Caco-2 (cell line): ENCODE measurements at regions of chr15 and their contacts with region 1.

Region 1: DNA sequence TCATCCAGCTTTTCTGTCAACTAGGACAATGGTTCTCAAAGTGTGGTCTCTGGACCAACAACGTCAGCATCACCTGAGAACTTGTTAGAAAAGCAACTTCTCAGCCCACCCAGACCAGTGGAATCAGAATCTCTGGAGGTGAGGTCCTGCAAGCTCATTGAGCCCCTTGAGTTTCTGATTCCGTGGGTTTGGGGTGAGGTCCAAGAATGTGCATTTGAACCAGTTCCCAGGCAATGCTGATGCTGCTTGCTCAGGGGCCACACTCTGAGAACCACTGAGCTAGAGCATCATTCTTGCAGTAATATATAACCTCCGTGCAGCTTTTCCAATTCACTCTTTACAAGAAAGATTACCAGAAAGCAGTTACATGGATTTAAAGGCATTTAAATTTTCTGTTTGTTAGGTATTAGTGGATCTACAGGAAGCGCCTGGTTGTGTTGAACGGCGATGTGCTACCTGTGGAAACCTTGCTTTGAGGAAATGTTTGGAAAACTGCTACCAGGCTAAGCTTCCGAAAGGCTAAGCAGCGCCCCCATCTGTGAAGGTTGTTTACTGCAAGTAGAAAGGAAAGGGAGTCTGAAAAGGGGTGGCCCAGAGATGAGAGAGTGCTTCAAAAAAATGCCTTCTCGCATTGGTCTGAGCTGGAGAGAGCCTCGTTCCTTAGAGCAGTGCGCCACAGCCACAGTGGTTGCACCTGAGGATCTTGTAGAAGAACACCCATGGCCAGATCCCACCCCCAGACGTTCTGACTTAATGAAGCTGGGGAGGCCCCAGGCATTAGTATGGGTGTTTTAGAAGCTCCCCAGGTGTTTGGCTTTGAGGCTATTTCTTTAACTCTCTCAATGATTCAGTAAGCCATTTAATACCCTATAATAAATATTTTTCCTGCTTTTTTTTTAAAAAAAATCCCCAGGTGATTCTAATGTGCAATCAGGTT is 50.0 kb downstream of the RLBP1 start:
- DNase-seq: peak; percentile 50 to 79
- H3K4me3 ChIP-seq: no peak overlapping the region
- H3K4me3 Mint-ChIP-seq: no peak overlapping the region
- H3K27ac Mint-ChIP-seq: no peak overlapping the region
- H3K4me1 ChIP-seq: peaks cover 11% of the 10 kb centered on the region
- H3K4me1 Mint-ChIP-seq: peaks cover 7% of the 10 kb centered on the region
- H3K27me3 ChIP-seq: no peaks in the 10 kb centered on the region
- H3K27me3 Mint-ChIP-seq: no peaks in the 10 kb centered on the region
- CTCF ChIP-seq: peak; percentile 83 to 86

Region 2: DNA sequence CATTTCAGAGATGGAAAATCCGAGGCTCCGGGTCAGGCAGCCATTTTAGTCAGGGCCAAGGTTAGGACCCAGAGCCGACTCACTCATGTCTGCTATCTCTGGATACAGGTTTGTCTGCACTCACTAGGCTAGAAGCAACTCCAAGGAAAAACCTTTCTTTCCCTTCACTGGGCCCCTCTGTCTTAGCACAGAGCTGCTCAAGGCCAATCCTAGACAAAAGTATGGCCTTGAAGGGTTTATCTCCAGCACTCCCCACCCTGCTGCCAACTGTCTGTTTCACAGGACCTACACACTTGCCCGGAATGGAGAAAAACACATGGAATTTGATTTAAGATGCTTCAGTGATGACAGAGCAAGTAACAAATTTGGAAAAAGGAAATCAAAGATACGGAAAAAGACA is 342.6 kb before region 1 on chr15:
- CTCF ChIA-PET with region 1: no interaction called
- POLR2A ChIA-PET with region 1: no interaction called
- intact Hi-C with region 1: no loop called
- DNase-seq: no peak
- H3K4me3 ChIP-seq: no peak overlapping the region
- H3K4me3 Mint-ChIP-seq: no peak overlapping the region
- H3K27ac Mint-ChIP-seq: no peak overlapping the region
- H3K4me1 ChIP-seq: no peaks in the 10 kb centered on the region
- H3K4me1 Mint-ChIP-seq: no peaks in the 10 kb centered on the region
- H3K27me3 ChIP-seq: no peaks in the 10 kb centered on the region
- H3K27me3 Mint-ChIP-seq: peaks cover under 1% of the 10 kb centered on the region
- CTCF ChIP-seq: no peak

Region 3: DNA sequence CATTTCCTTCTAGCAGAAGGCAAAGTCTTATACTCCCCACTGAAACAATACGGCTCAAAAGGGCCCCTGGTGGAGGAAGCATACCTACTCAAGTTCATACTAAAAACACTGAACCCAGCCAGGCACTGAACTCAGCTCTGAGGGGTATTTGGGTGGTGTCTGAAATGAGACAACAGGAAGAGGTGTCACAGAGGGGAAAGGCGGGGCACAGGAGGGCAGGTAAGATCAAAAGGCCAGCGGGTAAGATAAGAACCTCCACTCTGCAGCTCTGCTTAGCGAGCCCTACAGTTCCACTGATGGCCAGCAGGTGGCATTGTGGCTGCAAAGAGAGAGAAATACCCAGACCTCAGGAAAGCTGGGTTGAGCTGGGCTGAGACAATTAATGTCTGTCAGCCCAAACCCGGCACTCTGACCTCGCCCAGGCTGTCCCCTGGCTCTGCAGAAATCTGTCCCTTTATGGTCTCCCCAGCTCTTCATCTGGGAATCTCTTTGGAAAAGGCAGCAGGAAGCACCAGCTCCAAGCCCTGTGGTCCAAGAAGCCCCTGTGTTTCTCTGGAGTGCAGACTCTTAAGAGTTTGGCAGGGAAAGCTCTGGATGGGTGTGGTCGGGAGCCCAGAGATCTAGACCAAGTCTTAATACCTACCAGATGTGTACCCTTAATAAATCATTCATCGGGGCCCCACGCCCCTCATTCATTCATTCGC is 266.6 kb before region 1 on chr15:
- CTCF ChIA-PET with region 1: interaction called, 10 read pairs
- POLR2A ChIA-PET with region 1: no interaction called
- intact Hi-C with region 1: loop called (anchors 5 kb)
- DNase-seq: peak; percentile 82 to 88
- H3K4me3 ChIP-seq: no peak overlapping the region
- H3K4me3 Mint-ChIP-seq: peak overlapping the region; percentile 3
- H3K27ac Mint-ChIP-seq: no peak overlapping the region
- H3K4me1 ChIP-seq: peaks cover 14% of the 10 kb centered on the region; the same call in 1 of the 2 replicates
- H3K4me1 Mint-ChIP-seq: peaks cover 19% of the 10 kb centered on the region
- H3K27me3 ChIP-seq: no peaks in the 10 kb centered on the region
- H3K27me3 Mint-ChIP-seq: no peaks in the 10 kb centered on the region
- CTCF ChIP-seq: peak; percentile 93 to 95

Region 4: DNA sequence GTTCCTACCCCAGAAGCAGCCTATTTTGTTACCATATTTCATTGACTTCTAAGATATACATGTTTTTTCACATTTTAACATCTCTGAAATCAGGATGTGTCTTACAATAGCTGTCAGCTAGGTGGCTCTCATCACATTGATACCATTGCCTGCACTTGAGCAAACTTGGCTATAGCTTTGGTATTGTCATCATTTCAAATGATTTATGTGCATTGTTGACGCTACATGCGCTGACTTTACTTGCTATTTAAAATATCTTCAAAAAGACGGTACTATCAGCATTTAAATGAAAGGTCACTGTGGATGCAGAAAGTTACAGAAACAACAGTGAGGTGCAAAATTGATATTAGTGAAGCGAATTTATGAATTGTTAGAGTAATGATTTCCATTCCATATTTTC is 137.1 kb before region 1 on chr15:
- CTCF ChIA-PET with region 1: interaction called, 4 read pairs
- POLR2A ChIA-PET with region 1: no interaction called
- intact Hi-C with region 1: loop called (anchors 1 kb)
- DNase-seq: no peak
- H3K4me3 ChIP-seq: no peak overlapping the region
- H3K4me3 Mint-ChIP-seq: no peak overlapping the region
- H3K27ac Mint-ChIP-seq: no peak overlapping the region
- H3K4me1 ChIP-seq: no peaks in the 10 kb centered on the region
- H3K4me1 Mint-ChIP-seq: no peaks in the 10 kb centered on the region
- H3K27me3 ChIP-seq: no peaks in the 10 kb centered on the region
- H3K27me3 Mint-ChIP-seq: peaks cover 7% of the 10 kb centered on the region
- CTCF ChIP-seq: peak; percentile 22 to 53

Region 5: DNA sequence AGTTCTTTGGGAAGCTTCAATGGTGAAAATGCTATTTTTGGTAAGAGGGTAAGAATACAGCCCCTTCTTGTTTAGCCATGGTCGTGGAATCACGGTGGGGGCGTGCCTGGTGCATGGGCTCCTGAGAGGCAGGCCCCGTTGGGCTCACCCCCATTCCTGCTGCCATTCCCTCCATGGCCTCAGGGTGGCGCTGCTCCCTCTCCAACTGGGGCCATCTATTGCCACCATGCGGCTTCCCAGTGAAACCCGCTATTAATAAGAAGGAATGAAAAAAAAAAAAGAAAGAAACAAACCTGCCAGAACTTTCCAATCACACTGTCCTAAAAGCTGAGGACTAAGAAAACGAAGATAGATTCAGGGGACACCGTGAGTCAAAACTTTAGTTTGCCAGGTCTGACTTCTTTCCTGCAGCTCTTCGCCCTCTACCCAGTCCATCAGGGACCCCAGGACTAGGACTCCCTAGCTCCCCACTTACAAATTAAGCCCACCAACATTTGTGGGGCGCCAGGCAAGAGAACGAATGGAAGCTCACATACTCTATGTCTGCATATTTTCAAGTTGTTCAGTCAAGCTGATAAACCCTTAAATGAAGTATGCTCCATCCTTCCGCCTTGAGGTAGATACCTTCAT is 113.8 kb before region 1 on chr15:
- CTCF ChIA-PET with region 1: interaction called, 4 read pairs
- POLR2A ChIA-PET with region 1: no interaction called
- intact Hi-C with region 1: loop called (anchors 1 kb)
- DNase-seq: peak; percentile 77 to 89
- H3K4me3 ChIP-seq: no peak overlapping the region
- H3K4me3 Mint-ChIP-seq: no peak overlapping the region
- H3K27ac Mint-ChIP-seq: no peak overlapping the region
- H3K4me1 ChIP-seq: no peaks in the 10 kb centered on the region; the same call in 1 of the 2 replicates
- H3K4me1 Mint-ChIP-seq: peaks cover 5% of the 10 kb centered on the region
- H3K27me3 ChIP-seq: no peaks in the 10 kb centered on the region
- H3K27me3 Mint-ChIP-seq: no peaks in the 10 kb centered on the region
- CTCF ChIP-seq: peak; percentile 97

Region 6: DNA sequence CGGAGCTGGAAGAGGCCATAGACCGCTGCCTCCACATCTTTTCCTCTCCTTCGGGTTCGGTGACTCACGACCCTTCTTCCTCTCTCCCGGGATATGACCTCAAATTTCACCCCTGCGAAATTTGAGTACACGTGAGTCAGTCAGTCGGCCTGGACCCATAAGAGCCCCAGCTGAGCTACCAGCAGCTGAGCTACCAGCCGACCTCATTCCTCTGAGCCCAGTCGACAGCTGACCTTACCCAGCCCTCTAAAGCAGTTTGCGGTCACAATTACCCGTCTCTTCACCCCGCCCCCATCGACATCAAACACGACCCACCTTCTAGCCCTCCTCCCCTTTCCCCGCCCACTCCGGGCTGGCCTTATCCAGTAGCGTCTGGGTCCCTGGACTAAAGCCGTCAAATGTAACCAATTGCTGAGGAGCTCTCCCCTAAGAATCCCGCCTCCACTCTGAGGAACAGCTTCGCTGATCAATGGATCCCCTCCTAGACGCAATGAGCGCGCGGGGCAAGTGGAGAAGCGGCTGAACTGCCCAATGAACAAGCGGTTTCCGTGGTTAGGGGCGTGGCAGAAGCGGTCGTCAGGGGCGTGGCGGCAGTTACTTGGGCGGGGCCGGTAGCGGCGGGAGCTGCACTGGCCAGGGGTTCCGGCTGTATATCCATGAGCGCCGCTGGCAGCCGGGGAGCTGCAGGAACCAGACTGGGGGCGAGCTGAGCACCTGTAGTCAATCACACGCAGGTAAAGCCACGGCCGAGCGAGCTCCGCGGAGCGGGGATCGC is 83.4 kb before region 1 on chr15 and contains the start of gene ABHD2:
- CTCF ChIA-PET with region 1: interaction called, 13 read pairs
- POLR2A ChIA-PET with region 1: no interaction called
- intact Hi-C with region 1: no loop called
- DNase-seq: peak; percentile 98 to 99
- H3K4me3 ChIP-seq: peak within 1 kb of the TSS; percentile 61
- H3K4me3 Mint-ChIP-seq: no peak within 1 kb of the TSS
- H3K27ac Mint-ChIP-seq: no peak within 1 kb of the TSS
- H3K4me1 ChIP-seq: peaks cover 14% of the 10 kb centered on the region; the same call in 1 of the 2 replicates
- H3K4me1 Mint-ChIP-seq: peaks cover 8% of the 10 kb centered on the region
- H3K27me3 ChIP-seq: no peaks in the 10 kb centered on the region
- H3K27me3 Mint-ChIP-seq: no peaks in the 10 kb centered on the region
- CTCF ChIP-seq: no peak
- total RNA-seq, gene ABHD2: 56.4 and 63.0 TPM in 2 replicates

Region 7: GRCh38 chr15:89129123-89129815 is 42.1 kb before region 1 on chr15:
- CTCF ChIA-PET with region 1: interaction called, 12 read pairs
- POLR2A ChIA-PET with region 1: no interaction called
- intact Hi-C with region 1: no loop called
- DNase-seq: peak in 1 of 2 experiments; percentile 53
- H3K4me3 ChIP-seq: no peak overlapping the region
- H3K4me3 Mint-ChIP-seq: no peak overlapping the region
- H3K27ac Mint-ChIP-seq: no peak overlapping the region
- H3K4me1 ChIP-seq: peaks cover 61% of the 10 kb centered on the region
- H3K4me1 Mint-ChIP-seq: peaks cover 40% of the 10 kb centered on the region
- H3K27me3 ChIP-seq: no peaks in the 10 kb centered on the region
- H3K27me3 Mint-ChIP-seq: no peaks in the 10 kb centered on the region
- CTCF ChIP-seq: peak; percentile 60 to 79

Region 8: GRCh38 chr15:89139400-89140166 is 31.8 kb before region 1 on chr15:
- CTCF ChIA-PET with region 1: interaction called, 3 read pairs
- POLR2A ChIA-PET with region 1: no interaction called
- intact Hi-C with region 1: loop called (anchors 1 kb)
- DNase-seq: peak in 1 of 2 experiments; percentile 44
- H3K4me3 ChIP-seq: no peak overlapping the region
- H3K4me3 Mint-ChIP-seq: peak overlapping the region; percentile 32
- H3K27ac Mint-ChIP-seq: peak overlapping the region; percentile 84
- H3K4me1 ChIP-seq: peaks cover 14% of the 10 kb centered on the region
- H3K4me1 Mint-ChIP-seq: peaks cover 26% of the 10 kb centered on the region
- H3K27me3 ChIP-seq: no peaks in the 10 kb centered on the region
- H3K27me3 Mint-ChIP-seq: no peaks in the 10 kb centered on the region
- CTCF ChIP-seq: peak; percentile 2 to 32

Region 9: DNA sequence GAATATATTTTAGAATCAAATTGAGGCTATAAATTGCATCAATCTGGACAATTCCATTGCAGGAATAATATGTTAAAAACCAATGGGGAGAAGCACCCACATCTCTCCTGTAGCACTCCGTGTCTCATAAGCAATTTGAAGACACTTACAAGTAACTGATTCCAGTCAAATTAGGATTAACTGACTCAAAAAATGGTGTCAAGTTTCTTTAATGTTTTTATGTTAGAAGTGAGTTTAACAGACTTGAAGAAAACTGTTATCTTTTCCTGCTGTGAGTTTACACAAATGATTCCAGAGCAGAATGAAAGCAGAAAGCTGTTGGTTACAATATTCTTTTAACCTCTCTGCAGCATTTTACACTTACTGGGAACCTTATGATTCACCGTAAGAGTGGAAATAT is 26.8 kb after region 1 on chr15:
- CTCF ChIA-PET with region 1: no interaction called
- POLR2A ChIA-PET with region 1: no interaction called
- intact Hi-C with region 1: no loop called
- DNase-seq: no peak
- H3K4me3 ChIP-seq: no peak overlapping the region
- H3K4me3 Mint-ChIP-seq: no peak overlapping the region
- H3K27ac Mint-ChIP-seq: no peak overlapping the region
- H3K4me1 ChIP-seq: no peaks in the 10 kb centered on the region
- H3K4me1 Mint-ChIP-seq: no peaks in the 10 kb centered on the region
- H3K27me3 ChIP-seq: no peaks in the 10 kb centered on the region
- H3K27me3 Mint-ChIP-seq: no peaks in the 10 kb centered on the region
- CTCF ChIP-seq: no peak

Region 10: DNA sequence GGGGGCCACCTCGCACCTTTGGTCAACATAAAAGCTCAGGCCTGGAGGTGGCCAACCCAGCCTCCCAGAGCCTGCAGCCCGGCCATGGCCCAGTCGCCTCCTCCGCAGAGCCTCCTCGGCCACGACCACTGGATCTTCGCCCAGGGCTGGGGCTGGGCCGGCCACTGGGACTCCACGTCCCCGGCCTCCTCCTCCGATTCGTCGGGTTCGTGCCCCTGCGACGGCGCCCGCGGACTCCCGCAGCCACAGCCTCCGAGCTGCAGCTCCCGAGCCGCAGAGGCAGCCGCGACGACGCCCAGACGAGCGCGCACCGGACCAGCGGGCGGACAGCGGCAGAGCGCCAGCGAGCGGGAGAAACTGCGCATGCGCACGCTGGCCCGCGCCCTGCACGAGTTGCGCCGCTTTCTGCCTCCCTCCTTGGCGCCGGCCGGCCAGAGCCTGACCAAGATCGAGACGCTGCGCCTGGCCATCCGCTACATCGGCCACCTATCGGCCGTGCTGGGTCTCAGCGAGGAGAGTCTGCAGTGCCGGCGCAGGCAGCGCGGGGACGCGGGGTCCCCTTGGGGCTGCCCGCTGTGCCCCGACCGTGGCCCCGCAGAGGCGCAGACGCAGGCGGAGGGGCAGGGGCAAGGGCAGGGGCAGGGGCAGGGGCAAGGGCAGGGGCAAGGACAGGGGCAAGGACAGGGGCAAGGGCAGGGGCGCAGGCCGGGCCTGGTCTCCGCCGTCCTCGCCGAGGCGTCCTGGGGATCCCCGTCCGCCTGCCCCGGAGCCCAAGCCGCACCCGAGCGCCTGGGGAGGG is 605.1 kb after region 1 on chr15 and contains the start of gene MESP2:
- CTCF ChIA-PET with region 1: no interaction called
- POLR2A ChIA-PET with region 1: no interaction called
- intact Hi-C with region 1: no loop called
- DNase-seq: peak; percentile 64 to 75
- H3K4me3 ChIP-seq: peak within 1 kb of the TSS; percentile 39
- H3K4me3 Mint-ChIP-seq: peak within 1 kb of the TSS; percentile 45
- H3K27ac Mint-ChIP-seq: no peak within 1 kb of the TSS
- H3K4me1 ChIP-seq: peaks cover 27% of the 10 kb centered on the region
- H3K4me1 Mint-ChIP-seq: peaks cover 10% of the 10 kb centered on the region
- H3K27me3 ChIP-seq: no peaks in the 10 kb centered on the region
- H3K27me3 Mint-ChIP-seq: no peaks in the 10 kb centered on the region
- CTCF ChIP-seq: no peak
- total RNA-seq, gene MESP2: 0.32 and 0.70 TPM in 2 replicates